ENCODE measurements at regions of chr18 and their contacts with region 1.

Region 1: GRCh38 chr18:59631583-59632181 is 65.5 kb downstream of the CCBE1 start:
- DNase-seq: peak; percentile 23
- H3K4me3 ChIP-seq: no peak overlapping the region
- H3K27ac ChIP-seq: no peak overlapping the region
- H3K4me1 ChIP-seq: no peaks in the 10 kb centered on the region
- H3K27me3 ChIP-seq: no peaks in the 10 kb centered on the region
- CTCF ChIP-seq: peak; percentile 73 to 90

Region 2: GRCh38 chr18:59459369-59460079 is 172.2 kb before region 1 on chr18:
- CTCF ChIA-PET with region 1: no interaction called
- dilution Hi-C with region 1: no loop called
- in situ Hi-C with region 1: loop called in 1 of 2 experiments (anchors 25 kb)
- intact Hi-C with region 1: loop called (anchors 1 kb)
- DNase-seq: peak; percentile 19
- H3K4me3 ChIP-seq: no peak overlapping the region
- H3K27ac ChIP-seq: no peak overlapping the region
- H3K4me1 ChIP-seq: peaks cover 6% of the 10 kb centered on the region
- H3K27me3 ChIP-seq: no peaks in the 10 kb centered on the region
- CTCF ChIP-seq: peak; percentile 52 to 53

Region 3: GRCh38 chr18:59646228-59646962 is 14.7 kb after region 1 on chr18:
- CTCF ChIA-PET with region 1: no interaction called
- dilution Hi-C with region 1: no loop called
- in situ Hi-C with region 1: no loop called
- intact Hi-C with region 1: no loop called
- DNase-seq: no peak
- H3K4me3 ChIP-seq: no peak overlapping the region
- H3K27ac ChIP-seq: no peak overlapping the region
- H3K4me1 ChIP-seq: no peaks in the 10 kb centered on the region
- H3K27me3 ChIP-seq: no peaks in the 10 kb centered on the region
- CTCF ChIP-seq: no peak

Region 4: DNA sequence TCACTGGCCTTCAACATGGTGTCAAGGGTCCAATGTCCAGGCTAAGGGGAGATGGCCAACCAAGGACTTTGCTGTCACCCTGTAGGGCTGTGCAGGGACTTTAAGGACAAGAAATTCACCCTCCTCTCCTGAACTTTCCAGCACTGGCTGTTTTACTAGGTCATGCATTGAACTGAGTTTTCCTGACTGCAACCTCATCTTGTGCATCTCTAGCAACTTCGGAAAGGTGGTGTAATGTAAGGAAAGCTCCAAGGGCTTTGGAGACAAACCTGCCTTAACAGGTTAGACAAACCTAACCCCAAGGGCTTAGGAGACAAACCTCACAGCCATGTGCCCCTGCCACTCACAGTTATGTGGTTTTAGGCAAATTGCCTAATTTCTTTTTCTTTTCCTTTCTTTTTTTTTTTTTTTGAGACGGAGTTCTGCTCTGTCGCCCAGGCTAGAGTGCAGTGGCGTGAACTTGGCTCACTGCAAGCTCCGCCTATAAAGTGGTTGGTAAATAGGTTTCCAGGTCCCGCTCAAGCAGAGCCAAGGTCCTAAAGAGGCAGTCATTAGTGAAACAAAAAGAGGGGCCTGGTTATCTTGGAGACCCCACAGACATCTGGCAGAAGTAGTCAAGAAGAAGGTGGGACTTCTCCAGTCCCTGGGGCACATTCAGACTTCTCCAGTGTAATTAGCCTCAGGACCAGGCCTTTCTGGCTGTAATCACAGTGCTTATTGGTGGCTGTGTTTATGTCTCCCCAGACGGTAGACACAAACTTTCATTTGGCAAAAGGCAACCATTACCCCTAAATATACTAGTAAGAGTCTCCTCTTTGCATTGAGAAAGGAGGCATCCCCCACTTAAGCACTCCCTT is 230.5 kb after region 1 on chr18:
- CTCF ChIA-PET with region 1: interaction called, 15 read pairs
- dilution Hi-C with region 1: no loop called
- in situ Hi-C with region 1: no loop called
- intact Hi-C with region 1: no loop called
- DNase-seq: peak; percentile 70
- H3K4me3 ChIP-seq: no peak overlapping the region
- H3K27ac ChIP-seq: peak overlapping the region; percentile 14
- H3K4me1 ChIP-seq: peaks cover 30% of the 10 kb centered on the region
- H3K27me3 ChIP-seq: no peaks in the 10 kb centered on the region
- CTCF ChIP-seq: no peak

Region 5: GRCh38 chr18:59918320-59918755 is 286.7 kb after region 1 on chr18:
- CTCF ChIA-PET with region 1: no interaction called
- dilution Hi-C with region 1: no loop called
- in situ Hi-C with region 1: no loop called
- intact Hi-C with region 1: no loop called
- DNase-seq: peak; percentile 74
- H3K4me3 ChIP-seq: no peak overlapping the region
- H3K27ac ChIP-seq: peak overlapping the region; percentile 35
- H3K4me1 ChIP-seq: peaks cover 47% of the 10 kb centered on the region
- H3K27me3 ChIP-seq: no peaks in the 10 kb centered on the region
- CTCF ChIP-seq: no peak